Activated CD8-positive, alpha-beta T cell treated with anti-CD3 and anti-CD28 coated beads for 36 hours (primary cell): ENCODE measurements at regions of chr7 and their contacts with region 1.

Region 1: GRCh38 chr7:120987683-120988590 is 574 bp upstream of the CPED1 start:
- DNase-seq: peak; percentile 92
- ATAC-seq: peak; percentile 98
- H3K4me3 Mint-ChIP-seq: peak overlapping the region; percentile 57
- H3K27ac Mint-ChIP-seq: no peak overlapping the region
- H3K4me1 Mint-ChIP-seq: peaks cover 10% of the 10 kb centered on the region
- H3K27me3 Mint-ChIP-seq: peaks cover 51% of the 10 kb centered on the region
- CTCF ChIP-seq: peak; percentile 88

Region 2: GRCh38 chr7:121000081-121000983 is 12.4 kb after region 1 on chr7:
- CTCF ChIA-PET with region 1: interaction called, 10 read pairs
- POLR2A ChIA-PET with region 1: no interaction called
- intact Hi-C with region 1: no loop called
- DNase-seq: no peak
- ATAC-seq: no peak
- H3K4me3 Mint-ChIP-seq: no peak overlapping the region
- H3K27ac Mint-ChIP-seq: no peak overlapping the region
- H3K4me1 Mint-ChIP-seq: peaks cover 15% of the 10 kb centered on the region
- H3K27me3 Mint-ChIP-seq: peaks cover 7% of the 10 kb centered on the region
- CTCF ChIP-seq: no peak

Region 3: DNA sequence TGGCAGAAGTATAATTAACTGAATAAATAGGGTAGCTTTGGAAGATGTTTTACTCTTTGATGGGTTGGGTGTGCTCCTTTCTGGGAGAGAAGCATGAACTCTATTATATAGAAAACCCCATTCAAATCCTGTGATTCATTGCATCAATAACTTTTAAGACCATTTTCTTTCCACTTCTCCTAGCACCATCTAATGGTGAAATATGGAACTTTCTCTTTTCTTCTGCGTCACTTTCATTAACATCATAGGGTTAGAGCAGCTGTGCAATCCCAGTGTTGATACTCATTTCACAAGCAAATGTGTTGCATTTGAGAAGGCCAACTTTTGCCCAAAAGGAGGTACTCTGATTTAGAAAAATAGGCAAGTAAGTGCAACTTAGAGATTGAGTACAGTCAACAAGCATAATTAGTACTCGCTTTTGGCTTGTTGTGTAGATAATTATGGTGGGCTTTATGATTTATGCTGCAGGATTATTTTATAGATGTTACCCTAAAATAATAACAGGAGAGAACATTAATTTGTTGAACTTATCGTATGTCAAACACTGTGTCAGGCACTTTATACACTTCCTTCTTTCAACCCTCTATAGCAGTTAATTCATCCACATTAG is 93.5 kb after region 1 on chr7:
- CTCF ChIA-PET with region 1: interaction called, 38 read pairs
- POLR2A ChIA-PET with region 1: no interaction called
- intact Hi-C with region 1: loop called (anchors 1 kb)
- DNase-seq: no peak
- ATAC-seq: peak; percentile 80
- H3K4me3 Mint-ChIP-seq: no peak overlapping the region
- H3K27ac Mint-ChIP-seq: no peak overlapping the region
- H3K4me1 Mint-ChIP-seq: no peaks in the 10 kb centered on the region
- H3K27me3 Mint-ChIP-seq: peaks cover 3% of the 10 kb centered on the region
- CTCF ChIP-seq: peak; percentile 71

Region 4: GRCh38 chr7:121107923-121108498 is 120.1 kb after region 1 on chr7:
- CTCF ChIA-PET with region 1: interaction called, 30 read pairs
- POLR2A ChIA-PET with region 1: no interaction called
- intact Hi-C with region 1: loop called (anchors 2 kb)
- DNase-seq: no peak
- ATAC-seq: peak; percentile 82
- H3K4me3 Mint-ChIP-seq: no peak overlapping the region
- H3K27ac Mint-ChIP-seq: no peak overlapping the region
- H3K4me1 Mint-ChIP-seq: no peaks in the 10 kb centered on the region
- H3K27me3 Mint-ChIP-seq: peaks cover 6% of the 10 kb centered on the region
- CTCF ChIP-seq: peak; percentile 75